ENCODE measurements at regions of chr21 and their contacts with region 1.

Region 1: GRCh38 chr21:45396620-45396995 is 8.4 kb upstream of the COL18A1 start:
- DNase-seq: no peak
- H3K4me3 ChIP-seq: no peak overlapping the region
- H3K27ac ChIP-seq: no peak overlapping the region
- H3K4me1 ChIP-seq: no peaks in the 10 kb centered on the region
- H3K27me3 ChIP-seq: peaks cover 9 to 19% of the 10 kb centered on the region in 2 experiments
- CTCF ChIP-seq: no peak
- POLR2A ChIP-seq: no peak

Region 2: GRCh38 chr21:45432575-45433255 is 36.1 kb after region 1 on chr21:
- CTCF ChIA-PET with region 1: no interaction called
- POLR2A ChIA-PET with region 1: no interaction called
- dilution Hi-C with region 1: no loop called
- intact Hi-C with region 1: loop called (anchors 5 kb)
- DNase-seq: peak; percentile 72
- H3K4me3 ChIP-seq: no peak overlapping the region
- H3K27ac ChIP-seq: peak overlapping the region; percentile 53
- H3K4me1 ChIP-seq: peaks cover 22% of the 10 kb centered on the region
- H3K27me3 ChIP-seq: no peaks in the 10 kb centered on the region
- CTCF ChIP-seq: no peak
- POLR2A ChIP-seq: no peak